ENCODE measurements at regions of chr3 and their contacts with region 1.

Region 1: DNA sequence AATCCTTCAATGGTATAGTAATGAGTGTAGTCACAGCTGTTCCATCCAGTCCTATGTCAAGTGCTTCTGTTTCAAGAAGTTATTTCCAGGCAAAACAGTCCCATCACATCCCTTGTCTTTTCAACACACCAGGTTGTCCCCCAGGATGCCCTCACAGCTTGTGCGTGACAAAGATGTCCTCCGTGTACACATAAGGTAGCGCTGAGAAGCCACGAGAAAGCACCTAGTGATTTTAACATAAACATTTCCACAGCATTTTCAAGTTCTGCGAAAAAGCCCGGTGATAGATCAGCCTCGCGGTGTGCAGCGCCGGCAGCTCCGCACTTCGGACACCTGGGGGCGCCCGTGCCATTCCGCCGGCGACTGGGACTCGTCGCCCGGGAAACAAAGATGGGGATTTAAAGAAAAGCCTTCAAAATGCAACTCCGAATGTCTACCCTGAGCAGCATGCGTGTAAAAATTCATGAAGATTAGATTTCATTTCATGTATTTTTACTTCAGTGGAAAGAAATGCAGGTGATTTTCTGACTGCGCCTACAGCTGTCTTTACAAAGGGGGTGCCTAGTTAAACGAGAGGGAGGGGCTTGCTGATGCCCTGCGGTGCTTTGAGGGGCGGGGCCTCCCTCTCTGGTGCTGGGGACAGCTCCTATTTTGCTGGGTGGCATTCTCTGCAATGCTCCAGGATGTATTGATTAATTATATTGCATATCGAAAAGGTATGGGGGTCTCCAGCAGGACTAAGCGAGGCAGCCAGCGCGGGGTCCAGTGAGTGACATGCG is 49.9 kb downstream of the KY start:
- DNase-seq: peak; percentile 26 to 91 (median 62)
- ATAC-seq: peak; percentile 58 to 89 (median 88)
- H3K4me3 ChIP-seq: no peak overlapping the region
- H3K27ac ChIP-seq: no peak overlapping the region
- H3K4me1 ChIP-seq: no peaks in the 10 kb centered on the region
- H3K27me3 ChIP-seq: no peaks in the 10 kb centered on the region
- CTCF ChIP-seq: peak; percentile 71 to 96 (median 94)

Region 2: DNA sequence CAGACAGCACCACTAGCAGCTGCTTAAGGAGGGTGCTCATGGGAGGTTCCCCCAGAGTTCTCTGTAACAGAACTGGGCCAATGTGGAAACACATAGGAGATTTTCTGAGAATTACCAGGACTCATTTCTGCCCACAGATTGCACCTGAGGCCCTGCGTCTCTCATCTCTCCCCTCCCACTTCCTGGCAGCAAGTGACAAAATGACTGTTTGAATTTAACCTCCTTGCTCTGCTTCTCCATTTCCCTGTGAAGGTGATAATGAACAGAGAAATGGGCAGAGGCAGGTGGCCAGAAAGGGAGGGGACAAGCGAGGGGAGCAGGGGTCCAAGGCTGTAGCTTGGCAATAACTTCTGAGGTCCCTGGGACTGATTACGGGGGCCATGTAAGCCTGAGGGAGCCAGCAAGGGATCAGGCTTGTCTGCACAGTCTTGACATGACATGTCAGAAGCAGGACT is 202.2 kb after region 1 on chr3:
- intact Hi-C with region 1: no loop called
- DNase-seq: no peak
- ATAC-seq: no peak
- H3K4me3 ChIP-seq: no peak overlapping the region
- H3K27ac ChIP-seq: no peak overlapping the region
- H3K4me1 ChIP-seq: no peaks in the 10 kb centered on the region
- H3K27me3 ChIP-seq: peaks cover 0 to 5% (median 0%) of the 10 kb centered on the region in 4 donors
- CTCF ChIP-seq: no peak

Region 3: DNA sequence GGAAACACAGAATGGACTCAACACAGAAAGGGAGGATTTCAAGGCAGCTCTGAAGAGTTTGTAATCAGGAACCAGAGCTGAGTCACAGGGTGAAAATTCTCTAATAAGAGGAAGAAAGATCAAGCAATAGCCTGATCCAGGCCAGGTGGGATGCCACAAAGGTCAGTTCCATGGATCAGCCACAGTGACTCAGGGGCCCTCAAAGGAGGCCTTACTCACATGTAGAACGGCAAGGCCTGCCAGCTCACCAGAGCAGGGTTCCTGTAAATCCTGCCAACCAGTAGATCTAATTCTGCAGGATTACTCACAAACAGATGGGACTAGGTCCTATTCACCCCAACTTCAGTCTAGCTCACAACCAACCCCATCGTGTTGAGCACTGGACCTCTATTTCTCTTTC is 1286.3 kb after region 1 on chr3:
- intact Hi-C with region 1: loop called in 2 of 3 experiments (anchors 5 to 10 kb)
- DNase-seq: no peak
- ATAC-seq: no peak
- H3K4me3 ChIP-seq: no peak overlapping the region
- H3K27ac ChIP-seq: no peak overlapping the region
- H3K4me1 ChIP-seq: no peaks in the 10 kb centered on the region
- H3K27me3 ChIP-seq: no peaks in the 10 kb centered on the region
- CTCF ChIP-seq: no peak

Region 4: GRCh38 chr3:135895106-135895733 is 1294.3 kb after region 1 on chr3:
- intact Hi-C with region 1: loop called in 2 of 3 experiments (anchors 5 to 10 kb)
- DNase-seq: peak; percentile 32 to 86 (median 68)
- ATAC-seq: peak in 3 of 4 donors; percentile 78 to 87 (median 84)
- H3K4me3 ChIP-seq: no peak overlapping the region
- H3K27ac ChIP-seq: no peak overlapping the region
- H3K4me1 ChIP-seq: no peaks in the 10 kb centered on the region
- H3K27me3 ChIP-seq: no peaks in the 10 kb centered on the region
- CTCF ChIP-seq: peak; percentile 55 to 79 (median 70)